ENCODE measurements at regions of chr12 and their contacts with region 1.

Region 1: GRCh38 chr12:49707128-49707811 is at the start of gene FMNL3:
- DNase-seq: peak; percentile 71 to 96
- H3K4me3 ChIP-seq: peak within 1 kb of the TSS; percentile 65
- H3K27ac ChIP-seq: no peak within 1 kb of the TSS
- H3K4me1 ChIP-seq: no peaks in the 10 kb centered on the region
- H3K27me3 ChIP-seq: peaks cover 36% of the 10 kb centered on the region
- CTCF ChIP-seq: peak; percentile 89
- total RNA-seq, gene FMNL3: 5.6 and 6.5 TPM in 2 replicates

Region 2: DNA sequence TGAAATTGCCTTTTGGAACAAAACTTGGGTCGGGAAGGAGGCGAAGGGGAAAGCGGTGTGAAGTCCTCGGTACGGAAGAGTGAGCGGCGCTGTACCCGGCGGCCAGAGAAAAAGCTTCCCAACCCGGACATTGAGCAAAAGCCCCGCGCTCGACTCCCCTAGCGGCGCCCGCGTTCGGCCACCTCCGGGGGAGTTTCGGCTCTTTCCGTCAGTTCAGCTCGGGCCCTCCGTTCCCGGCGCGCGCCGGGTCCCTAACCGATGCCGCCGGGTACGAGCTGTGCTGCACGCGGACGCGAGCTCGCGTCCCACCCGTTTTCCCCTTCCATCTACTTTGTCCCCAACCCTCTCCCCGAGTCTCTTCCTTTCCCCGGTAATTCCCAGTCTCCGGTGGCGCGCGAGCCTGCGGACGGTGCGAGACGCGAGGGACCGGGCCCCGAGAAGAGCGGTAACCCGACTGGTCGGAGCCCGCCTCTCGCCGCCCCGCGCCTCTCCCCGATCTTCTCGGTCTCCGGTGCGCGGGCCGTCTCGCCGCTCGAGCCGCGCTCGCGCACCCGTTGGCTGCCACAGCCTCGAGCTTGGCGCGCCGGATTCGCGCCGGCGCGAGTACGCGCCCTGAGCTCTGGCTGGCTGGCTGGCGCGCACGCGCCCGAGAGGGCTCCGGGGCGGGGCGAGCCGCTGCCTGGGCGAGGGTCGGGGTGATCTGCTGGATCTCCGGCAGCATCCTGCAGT is 340.5 kb before region 1 on chr12:
- CTCF ChIA-PET with region 1: no interaction called
- POLR2A ChIA-PET with region 1: no interaction called
- intact Hi-C with region 1: loop called (anchors 10 kb)
- DNase-seq: peak; percentile 81 to 98
- H3K4me3 ChIP-seq: peak overlapping the region; percentile 93
- H3K27ac ChIP-seq: peak overlapping the region; percentile 73
- H3K4me1 ChIP-seq: peaks cover 36% of the 10 kb centered on the region
- H3K27me3 ChIP-seq: no peaks in the 10 kb centered on the region
- CTCF ChIP-seq: no peak; the same call in 1 of the 2 replicates

Region 3: DNA sequence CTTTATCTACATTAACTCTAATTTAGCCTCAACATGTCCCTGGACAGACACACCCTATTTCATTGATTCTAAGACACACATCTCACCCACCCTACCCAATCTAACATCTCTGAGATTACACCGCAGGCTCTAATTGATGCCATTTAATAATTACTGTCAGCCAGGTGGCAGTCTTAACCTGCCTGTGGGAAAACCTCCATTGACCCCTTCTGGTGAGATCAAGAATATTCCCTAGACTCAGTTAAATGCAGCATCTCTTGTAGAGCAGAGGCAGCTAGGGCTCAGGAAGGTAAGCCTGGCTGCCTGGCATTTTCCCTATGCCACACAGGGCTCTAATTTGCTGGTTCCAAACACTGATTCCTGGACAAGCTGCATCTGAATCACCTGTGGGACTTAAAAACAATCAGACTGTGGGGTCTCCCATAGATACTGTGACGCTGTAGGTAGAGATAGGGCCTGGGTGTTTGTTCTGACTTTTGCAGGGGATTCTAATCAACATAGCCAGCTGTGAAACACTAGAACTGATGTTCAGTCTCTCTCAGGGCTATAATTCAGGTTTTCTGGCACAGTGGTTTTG is 153.7 kb before region 1 on chr12:
- CTCF ChIA-PET with region 1: no interaction called
- POLR2A ChIA-PET with region 1: no interaction called
- intact Hi-C with region 1: loop called (anchors 1 kb)
- DNase-seq: peak in 1 of 2 experiments; percentile 52
- H3K4me3 ChIP-seq: no peak overlapping the region
- H3K27ac ChIP-seq: no peak overlapping the region
- H3K4me1 ChIP-seq: no peaks in the 10 kb centered on the region
- H3K27me3 ChIP-seq: peaks cover 4% of the 10 kb centered on the region; the same call in 1 of the 2 replicates
- CTCF ChIP-seq: peak; percentile 77

Region 4: DNA sequence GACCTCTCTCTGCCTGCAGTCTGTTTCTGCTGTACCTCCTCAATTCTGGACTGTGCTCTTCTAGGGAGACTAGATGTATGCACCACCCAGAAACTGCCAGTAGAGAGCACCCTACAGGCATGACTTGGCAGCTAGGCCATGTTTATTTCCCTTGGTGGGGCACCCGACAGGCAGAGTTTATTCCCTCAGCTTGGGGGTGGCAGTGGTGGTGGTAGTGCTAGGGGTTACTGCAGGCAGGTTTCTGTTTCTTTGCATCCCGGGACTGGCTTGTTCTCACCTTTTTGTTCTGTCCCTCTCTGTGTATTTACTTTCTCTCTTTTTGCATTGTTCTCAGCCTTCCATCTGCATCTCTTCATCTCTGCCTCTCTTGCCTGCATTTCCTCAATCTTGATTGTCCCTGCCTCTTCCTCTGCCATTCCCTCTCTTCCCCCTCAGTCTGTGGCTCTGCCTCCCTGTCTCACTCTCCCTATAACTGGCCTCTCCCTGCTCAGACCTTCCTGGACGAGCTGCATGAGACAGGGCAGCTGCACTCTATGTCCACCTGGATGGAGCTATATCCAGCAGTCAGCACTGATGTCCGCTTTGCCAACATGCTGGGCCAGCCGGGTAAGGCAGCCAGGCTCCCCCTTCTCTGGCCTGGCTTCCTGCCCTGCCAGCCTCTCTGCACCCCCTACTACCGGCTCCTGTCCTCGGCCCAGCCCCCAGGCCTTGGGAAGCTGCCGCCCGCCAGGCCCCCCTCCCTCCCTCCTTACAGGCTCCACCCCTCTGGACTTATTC is 70.1 kb before region 1 on chr12:
- CTCF ChIA-PET with region 1: interaction called, 3 read pairs
- POLR2A ChIA-PET with region 1: no interaction called
- intact Hi-C with region 1: loop called (anchors 1 kb)
- DNase-seq: peak in 1 of 2 experiments; percentile 33
- H3K4me3 ChIP-seq: no peak overlapping the region
- H3K27ac ChIP-seq: no peak overlapping the region
- H3K4me1 ChIP-seq: peaks cover 9% of the 10 kb centered on the region
- H3K27me3 ChIP-seq: no peaks in the 10 kb centered on the region
- CTCF ChIP-seq: peak; percentile 66

Region 5: DNA sequence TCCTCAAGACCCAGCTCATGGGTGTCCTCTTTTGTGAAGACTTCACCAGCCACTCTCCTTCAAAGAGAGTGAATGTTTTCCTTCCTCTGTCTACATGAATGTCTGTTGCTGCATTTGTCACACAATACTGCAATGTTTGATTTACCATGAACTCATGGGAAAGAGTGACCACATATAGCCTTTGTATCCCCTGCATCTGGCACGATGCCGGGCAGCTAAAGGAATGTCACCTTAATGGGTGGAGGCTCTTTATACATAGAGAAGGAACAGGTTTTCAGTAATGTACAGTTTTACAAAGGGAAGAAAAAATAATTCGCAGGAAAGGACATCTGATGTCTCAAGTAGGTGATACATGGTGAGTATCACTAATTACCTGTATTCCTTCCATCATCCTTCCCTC is 147.7 kb after region 1 on chr12:
- CTCF ChIA-PET with region 1: interaction called, 10 read pairs
- POLR2A ChIA-PET with region 1: no interaction called
- intact Hi-C with region 1: no loop called
- DNase-seq: peak in 1 of 2 experiments; percentile 51
- H3K4me3 ChIP-seq: no peak overlapping the region
- H3K27ac ChIP-seq: no peak overlapping the region
- H3K4me1 ChIP-seq: no peaks in the 10 kb centered on the region
- H3K27me3 ChIP-seq: peaks cover 7% of the 10 kb centered on the region
- CTCF ChIP-seq: no peak